ENCODE measurements at regions of chr5 and their contacts with region 1.

Region 1: DNA sequence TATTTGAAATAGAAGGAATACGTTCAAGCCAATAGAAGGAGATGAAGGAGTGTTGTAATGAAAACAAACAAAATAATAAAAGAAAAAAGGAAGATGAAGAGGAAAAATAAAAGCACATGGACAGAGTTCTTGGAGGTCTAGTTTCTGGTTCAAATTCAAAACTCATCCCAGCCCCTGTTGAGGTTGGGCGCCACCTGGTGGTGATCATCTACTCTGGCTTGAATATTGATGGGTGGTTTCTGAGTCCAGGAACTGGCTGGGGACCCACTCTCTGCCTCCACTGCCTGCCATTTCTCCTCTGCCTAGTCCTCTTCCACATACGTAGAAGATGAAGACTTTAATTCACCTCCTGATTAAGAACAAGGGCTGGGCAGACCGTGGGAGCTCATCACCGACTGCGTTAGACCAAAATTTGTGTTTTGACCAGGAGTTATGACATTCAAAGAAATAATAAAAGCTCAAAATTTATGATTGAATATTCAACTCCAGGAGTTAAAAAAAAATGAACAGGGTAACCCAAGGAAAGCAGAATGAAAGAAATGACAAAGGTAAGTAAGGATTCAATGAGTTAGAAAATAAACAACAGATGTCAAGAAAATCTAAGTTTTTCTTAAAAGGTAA is 99.0 kb upstream of the SLC1A3 start:
- DNase-seq: peak; percentile 58 to 88 (median 73)
- ATAC-seq: peak; percentile 69
- H3K4me3 ChIP-seq: no peak overlapping the region
- H3K4me1 ChIP-seq: no peaks in the 10 kb centered on the region
- CTCF ChIP-seq: peak; percentile 45

Region 2: DNA sequence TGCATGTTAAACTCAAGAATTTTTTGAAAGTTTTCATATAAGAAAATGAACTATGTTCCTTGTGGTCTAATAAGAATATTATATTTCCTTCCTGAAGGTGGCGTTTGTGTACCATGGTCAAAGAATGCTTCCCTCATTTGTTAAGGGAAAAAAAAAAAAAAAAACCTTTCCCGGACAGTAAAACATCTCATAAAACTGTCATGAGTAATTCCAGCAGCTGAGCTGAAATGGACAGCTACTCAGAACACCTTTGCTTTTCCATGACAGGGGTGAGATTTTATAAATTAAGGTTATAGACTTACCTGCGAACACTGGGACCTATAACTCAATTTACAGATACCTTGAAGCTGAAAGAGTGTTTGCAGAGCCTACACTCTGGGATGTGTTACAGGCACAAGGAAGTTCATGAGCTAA is 92.6 kb before region 1 on chr5:
- intact Hi-C with region 1: loop called (anchors 5 to 10 kb)
- DNase-seq: no peak
- ATAC-seq: peak; percentile 69
- H3K4me3 ChIP-seq: no peak overlapping the region
- H3K4me1 ChIP-seq: no peaks in the 10 kb centered on the region
- CTCF ChIP-seq: peak; percentile 12

Region 3: DNA sequence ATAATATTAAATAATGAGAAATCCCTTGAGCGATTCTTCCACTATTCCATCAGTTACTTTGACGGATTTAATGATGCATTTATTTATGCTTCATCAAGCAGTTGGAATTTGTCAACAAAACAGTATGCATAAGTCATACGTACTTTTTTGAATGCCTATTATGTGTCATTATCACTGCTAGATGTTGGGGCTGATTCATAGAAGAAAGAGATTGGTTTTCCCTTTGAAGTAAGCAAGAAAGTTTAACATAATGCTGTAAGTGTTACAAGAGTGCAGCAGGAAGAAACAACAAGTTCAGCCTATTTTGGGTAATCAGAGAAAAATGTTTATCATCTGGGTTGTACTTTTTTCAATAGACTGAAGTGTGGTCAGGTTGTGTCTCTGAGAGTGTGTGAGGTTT is 84.5 kb before region 1 on chr5:
- intact Hi-C with region 1: loop called in 1 of 2 experiments (anchors 10 kb)
- DNase-seq: no peak
- ATAC-seq: no peak
- H3K4me3 ChIP-seq: no peak overlapping the region
- H3K4me1 ChIP-seq: no peaks in the 10 kb centered on the region
- CTCF ChIP-seq: no peak

Region 4: GRCh38 chr5:36664781-36665180 is 157.3 kb after region 1 on chr5:
- intact Hi-C with region 1: no loop called
- DNase-seq: no peak
- ATAC-seq: no peak
- H3K4me3 ChIP-seq: no peak overlapping the region
- H3K4me1 ChIP-seq: no peaks in the 10 kb centered on the region
- CTCF ChIP-seq: no peak

Region 5: GRCh38 chr5:38029482-38030001 is 1522.1 kb after region 1 on chr5:
- intact Hi-C with region 1: no loop called
- DNase-seq: no peak
- ATAC-seq: no peak
- H3K4me3 ChIP-seq: no peak overlapping the region
- H3K4me1 ChIP-seq: no peaks in the 10 kb centered on the region
- CTCF ChIP-seq: no peak